Ovary (tissue), 10 donors: ENCODE measurements at regions of chr13 and their contacts with region 1.

Region 1: GRCh38 chr13:30121666-30122065 is 185.7 kb downstream of the KATNAL1 start:
- DNase-seq: no peak
- H3K4me3 ChIP-seq: no peak overlapping the region
- H3K27ac ChIP-seq: no peak overlapping the region
- H3K4me1 ChIP-seq: peaks cover 4% of the 10 kb centered on the region
- H3K27me3 ChIP-seq: no peaks in the 10 kb centered on the region
- CTCF ChIP-seq: no peak
- EP300 ChIP-seq: no peak
- POLR2A ChIP-seq: no peak

Region 2: GRCh38 chr13:29844441-29844840 is 277.2 kb before region 1 on chr13:
- intact Hi-C with region 1: loop called in 1 of 4 experiments (anchors 5 kb)
- DNase-seq: no peak
- H3K4me3 ChIP-seq: no peak overlapping the region
- H3K27ac ChIP-seq: no peak overlapping the region
- H3K4me1 ChIP-seq: no peaks in the 10 kb centered on the region
- H3K27me3 ChIP-seq: no peaks in the 10 kb centered on the region
- CTCF ChIP-seq: no peak
- EP300 ChIP-seq: no peak
- POLR2A ChIP-seq: no peak

Region 3: GRCh38 chr13:30268673-30269072 is 147.0 kb after region 1 on chr13:
- intact Hi-C with region 1: no loop called
- DNase-seq: no peak
- H3K4me3 ChIP-seq: no peak overlapping the region
- H3K27ac ChIP-seq: no peak overlapping the region
- H3K4me1 ChIP-seq: peaks cover 3% of the 10 kb centered on the region
- H3K27me3 ChIP-seq: no peaks in the 10 kb centered on the region
- CTCF ChIP-seq: no peak
- EP300 ChIP-seq: no peak
- POLR2A ChIP-seq: no peak